ENCODE measurements at regions of chr12 and their contacts with region 1.

Region 1: DNA sequence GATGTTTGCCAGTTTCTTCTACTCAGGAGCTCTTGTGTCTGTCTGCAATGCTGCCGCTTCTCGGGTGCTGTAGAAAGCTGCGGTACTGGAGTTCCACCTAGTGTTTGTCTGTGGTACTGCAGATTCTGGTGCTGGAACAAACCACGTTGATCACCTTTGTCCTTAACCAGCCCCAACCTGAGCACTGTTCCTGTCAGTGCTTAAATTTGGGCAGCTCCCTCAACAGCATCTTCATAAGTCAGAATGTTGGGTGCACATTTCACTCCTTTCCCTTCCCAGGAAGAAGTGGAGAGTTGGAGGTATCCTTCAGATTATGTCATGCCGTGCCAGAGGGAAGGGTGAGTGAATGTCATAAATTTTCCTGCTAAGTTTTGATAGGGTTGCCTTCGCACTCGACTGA is 48.7 kb upstream of the LALBA start:
- DNase-seq: peak; percentile 75
- ATAC-seq: peak; percentile 96
- H3K4me3 ChIP-seq: no peak overlapping the region
- H3K27ac ChIP-seq: no peak overlapping the region
- H3K4me1 ChIP-seq: peaks cover 3 to 4% of the 10 kb centered on the region in 2 experiments; a peak in 3 of 4 replicates
- H3K27me3 ChIP-seq: no peaks in the 10 kb centered on the region
- CTCF ChIP-seq: peak; percentile 87 to 99 (median 98)
- POLR2A ChIP-seq: no peak
- RAD21 ChIP-seq: peak; percentile 98

Region 2: GRCh38 chr12:47941851-47942601 is 676.5 kb before region 1 on chr12:
- CTCF ChIA-PET with region 1: no interaction called
- POLR2A ChIA-PET with region 1: no interaction called
- RAD21 ChIA-PET with region 1: no interaction called
- intact Hi-C with region 1: loop called (anchors 5 kb)
- DNase-seq: no peak
- ATAC-seq: peak; percentile 91
- H3K4me3 ChIP-seq: no peak overlapping the region
- H3K27ac ChIP-seq: no peak overlapping the region
- H3K4me1 ChIP-seq: peaks cover 0 to 40% of the 10 kb centered on the region in 2 experiments; a peak in 2 of 4 replicates
- H3K27me3 ChIP-seq: no peaks in the 10 kb centered on the region
- CTCF ChIP-seq: peak in 2 of 3 experiments; percentile 47 to 60; a peak in 4 of 6 replicates
- POLR2A ChIP-seq: no peak
- RAD21 ChIP-seq: peak; percentile 39

Region 3: GRCh38 chr12:48084066-48084465 is 534.5 kb before region 1 on chr12:
- CTCF ChIA-PET with region 1: no interaction called
- POLR2A ChIA-PET with region 1: no interaction called
- RAD21 ChIA-PET with region 1: no interaction called
- intact Hi-C with region 1: loop called (anchors 1 kb)
- DNase-seq: no peak
- ATAC-seq: no peak
- H3K4me3 ChIP-seq: no peak overlapping the region
- H3K27ac ChIP-seq: no peak overlapping the region
- H3K4me1 ChIP-seq: no peaks in the 10 kb centered on the region
- H3K27me3 ChIP-seq: no peaks in the 10 kb centered on the region
- CTCF ChIP-seq: peak in 2 of 3 experiments; percentile 34 to 42; a peak in 2 of 6 replicates
- POLR2A ChIP-seq: no peak
- RAD21 ChIP-seq: peak; percentile 46

Region 4: GRCh38 chr12:48189331-48190125 is 429.0 kb before region 1 on chr12:
- CTCF ChIA-PET with region 1: no interaction called
- POLR2A ChIA-PET with region 1: no interaction called
- RAD21 ChIA-PET with region 1: no interaction called
- intact Hi-C with region 1: loop called (anchors 5 kb)
- DNase-seq: peak; percentile 57
- ATAC-seq: peak; percentile 77
- H3K4me3 ChIP-seq: no peak overlapping the region
- H3K27ac ChIP-seq: no peak overlapping the region
- H3K4me1 ChIP-seq: peaks cover 4 to 12% of the 10 kb centered on the region in 2 experiments; a peak in 2 of 4 replicates
- H3K27me3 ChIP-seq: no peaks in the 10 kb centered on the region
- CTCF ChIP-seq: peak; percentile 72 to 90 (median 85); a peak in 5 of 6 replicates
- POLR2A ChIP-seq: no peak
- RAD21 ChIP-seq: peak; percentile 80

Region 5: DNA sequence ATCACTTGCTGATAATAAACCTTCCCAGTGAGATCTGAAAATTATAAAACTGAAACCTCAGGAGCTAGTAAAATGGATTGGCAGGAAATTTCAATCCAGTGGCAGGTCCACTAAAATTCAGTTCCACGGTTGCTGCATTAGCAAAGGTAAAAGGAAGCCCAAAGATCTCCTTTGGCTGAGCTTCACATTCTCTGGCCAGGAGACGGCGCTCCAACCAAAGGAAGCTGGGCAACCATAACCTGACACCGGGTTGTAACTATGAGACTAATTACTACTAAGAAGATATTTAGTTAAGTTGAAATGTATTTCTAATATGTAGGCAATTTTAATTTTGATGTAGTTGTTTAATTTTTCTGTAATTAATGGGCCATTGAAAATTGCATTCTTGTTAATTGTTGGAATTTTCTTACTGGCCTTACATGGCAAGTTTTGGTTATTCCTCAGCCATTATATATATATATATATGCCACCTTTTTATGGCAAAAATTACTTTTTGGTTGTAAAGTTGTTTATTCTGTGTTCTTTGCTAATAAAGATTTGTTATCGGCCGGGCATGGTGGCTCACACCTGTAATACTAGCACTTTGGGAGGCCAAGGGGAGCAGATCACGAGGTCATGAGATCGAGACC is 76.1 kb before region 1 on chr12:
- CTCF ChIA-PET with region 1: interaction called, 135 read pairs
- POLR2A ChIA-PET with region 1: interaction called, 10 read pairs
- RAD21 ChIA-PET with region 1: interaction called, 3 to 4 read pairs
- intact Hi-C with region 1: loop called (anchors 1 kb)
- DNase-seq: peak; percentile 23
- ATAC-seq: peak; percentile 79
- H3K4me3 ChIP-seq: no peak overlapping the region
- H3K27ac ChIP-seq: no peak overlapping the region
- H3K4me1 ChIP-seq: peaks cover 4 to 10% of the 10 kb centered on the region in 2 experiments; a peak in 3 of 4 replicates
- H3K27me3 ChIP-seq: no peaks in the 10 kb centered on the region
- CTCF ChIP-seq: peak; percentile 68 to 73 (median 69); a peak in 5 of 6 replicates
- POLR2A ChIP-seq: no peak
- RAD21 ChIP-seq: peak; percentile 87

Region 6: GRCh38 chr12:48556631-48557030 is 61.9 kb before region 1 on chr12:
- CTCF ChIA-PET with region 1: no interaction called
- POLR2A ChIA-PET with region 1: no interaction called
- RAD21 ChIA-PET with region 1: no interaction called
- intact Hi-C with region 1: no loop called
- DNase-seq: no peak
- ATAC-seq: no peak
- H3K4me3 ChIP-seq: no peak overlapping the region
- H3K27ac ChIP-seq: no peak overlapping the region
- H3K4me1 ChIP-seq: no peaks in the 10 kb centered on the region
- H3K27me3 ChIP-seq: no peaks in the 10 kb centered on the region
- CTCF ChIP-seq: no peak
- POLR2A ChIP-seq: no peak
- RAD21 ChIP-seq: no peak